GM12878 (cell line): ENCODE measurements at regions of chr19 and their contacts with region 1.

Region 1: GRCh38 chr19:38618590-38619360 is at the start of gene EIF3K:
- DNase-seq: peak; percentile 97
- ATAC-seq: peak; percentile 62
- H3K4me3 ChIP-seq: peak within 1 kb of the TSS; percentile 98
- H3K27ac ChIP-seq: peak within 1 kb of the TSS; percentile 98
- H3K4me1 ChIP-seq: peaks cover 12% of the 10 kb centered on the region
- H3K27me3 ChIP-seq: no peaks in the 10 kb centered on the region
- CTCF ChIP-seq: no peak
- EP300 ChIP-seq: no peak
- POLR2A ChIP-seq: peak; percentile 98
- RAD21 ChIP-seq: no peak
- polyA plus RNA-seq, gene EIF3K: 715 to 863 TPM

Region 2: DNA sequence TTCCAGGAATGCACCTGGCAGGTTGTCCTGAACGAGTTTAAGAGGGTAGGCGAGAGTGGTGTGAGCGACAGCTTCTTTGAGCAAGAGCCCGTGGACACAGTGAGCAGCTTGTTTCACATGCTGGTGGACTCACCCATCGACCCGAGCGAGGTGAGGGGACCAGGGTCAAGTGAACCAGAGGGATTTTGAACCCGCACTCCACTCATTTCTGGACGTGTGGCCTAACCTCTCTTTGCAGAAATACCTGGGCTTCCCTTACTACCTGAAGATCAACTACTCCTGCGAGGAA is 281.5 kb before region 1 on chr19:
- CTCF ChIA-PET with region 1: no interaction called
- POLR2A ChIA-PET with region 1: no interaction called
- RAD21 ChIA-PET with region 1: no interaction called
- SMC1A ChIA-PET with region 1: no interaction called
- in situ Hi-C with region 1: no loop called
- intact Hi-C with region 1: no loop called
- DNase-seq: no peak
- ATAC-seq: no peak
- H3K4me3 ChIP-seq: peak overlapping the region; percentile 46; the same call in 1 of the 2 replicates
- H3K27ac ChIP-seq: no peak overlapping the region
- H3K4me1 ChIP-seq: peaks cover 3% of the 10 kb centered on the region; the same call in 1 of the 2 replicates
- H3K27me3 ChIP-seq: no peaks in the 10 kb centered on the region
- CTCF ChIP-seq: no peak
- EP300 ChIP-seq: no peak
- POLR2A ChIP-seq: no peak
- RAD21 ChIP-seq: no peak

Region 3: GRCh38 chr19:38514812-38515633 is 103.8 kb before region 1 on chr19:
- CTCF ChIA-PET with region 1: interaction called, 5 read pairs
- POLR2A ChIA-PET with region 1: no interaction called
- RAD21 ChIA-PET with region 1: interaction called, 12 read pairs
- SMC1A ChIA-PET with region 1: interaction called, 3 read pairs
- in situ Hi-C with region 1: no loop called
- intact Hi-C with region 1: no loop called
- DNase-seq: no peak
- ATAC-seq: peak; percentile 96
- H3K4me3 ChIP-seq: no peak overlapping the region
- H3K27ac ChIP-seq: no peak overlapping the region
- H3K4me1 ChIP-seq: peaks cover 6% of the 10 kb centered on the region
- H3K27me3 ChIP-seq: no peaks in the 10 kb centered on the region
- CTCF ChIP-seq: peak; percentile 89 to 98 (median 90); a peak in 5 of 6 replicates
- EP300 ChIP-seq: no peak
- POLR2A ChIP-seq: no peak
- RAD21 ChIP-seq: peak; percentile 74

Region 4: GRCh38 chr19:38551450-38551813 is 67.3 kb before region 1 on chr19:
- CTCF ChIA-PET with region 1: interaction called, 60 read pairs
- POLR2A ChIA-PET with region 1: interaction called, 135 read pairs
- RAD21 ChIA-PET with region 1: interaction called, 135 read pairs
- SMC1A ChIA-PET with region 1: interaction called, 85 read pairs
- in situ Hi-C with region 1: no loop called
- intact Hi-C with region 1: no loop called
- DNase-seq: peak; percentile 52
- ATAC-seq: peak; percentile 87
- H3K4me3 ChIP-seq: no peak overlapping the region
- H3K27ac ChIP-seq: no peak overlapping the region
- H3K4me1 ChIP-seq: peaks cover 31% of the 10 kb centered on the region
- H3K27me3 ChIP-seq: no peaks in the 10 kb centered on the region
- CTCF ChIP-seq: no peak
- EP300 ChIP-seq: peak; percentile 87 to 92; a peak in 3 of 4 replicates
- POLR2A ChIP-seq: no peak
- RAD21 ChIP-seq: no peak

Region 5: DNA sequence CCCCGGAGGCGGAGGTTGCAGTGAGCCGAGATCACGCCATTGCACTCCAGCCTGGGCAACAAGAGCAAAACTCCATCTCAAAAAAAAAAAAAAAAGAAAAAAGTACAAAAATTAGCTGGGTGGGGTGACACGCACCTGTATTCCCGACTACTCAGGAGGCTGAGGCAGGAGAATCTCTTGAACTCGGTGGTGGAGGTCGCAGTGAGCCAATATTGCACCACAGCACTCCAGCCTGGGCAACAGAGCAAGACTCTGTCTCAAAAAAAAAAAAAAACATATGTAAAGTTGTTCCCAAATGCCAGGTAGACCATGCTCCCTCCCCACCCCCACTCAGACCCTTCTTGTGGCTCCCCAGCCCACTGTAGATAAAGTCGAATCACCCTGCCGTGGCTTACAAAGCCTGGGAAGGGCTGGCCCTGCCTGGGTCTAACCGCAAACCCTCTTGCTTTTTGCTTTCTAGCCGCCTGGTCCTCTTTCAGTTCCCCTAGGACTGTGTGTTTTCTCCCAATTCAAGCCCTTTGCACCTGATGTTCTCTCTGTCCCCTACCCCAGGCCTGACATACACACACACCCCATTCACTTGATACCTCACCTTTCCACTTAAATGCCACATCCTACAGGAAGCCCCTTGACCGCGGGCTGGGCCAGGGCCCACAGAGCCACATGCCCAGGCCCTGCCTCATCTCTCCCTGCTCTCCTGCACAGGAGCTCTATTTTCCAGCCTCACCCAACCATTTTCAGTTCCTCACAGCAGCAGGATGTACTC is 35.4 kb before region 1 on chr19:
- CTCF ChIA-PET with region 1: interaction called, 7 read pairs
- POLR2A ChIA-PET with region 1: interaction called, 5 read pairs
- RAD21 ChIA-PET with region 1: interaction called, 22 read pairs
- SMC1A ChIA-PET with region 1: interaction called, 6 read pairs
- in situ Hi-C with region 1: no loop called
- intact Hi-C with region 1: no loop called
- DNase-seq: peak; percentile 78
- ATAC-seq: peak; percentile 95
- H3K4me3 ChIP-seq: no peak overlapping the region
- H3K27ac ChIP-seq: peak overlapping the region; percentile 52
- H3K4me1 ChIP-seq: peaks cover 18% of the 10 kb centered on the region
- H3K27me3 ChIP-seq: no peaks in the 10 kb centered on the region
- CTCF ChIP-seq: no peak
- EP300 ChIP-seq: peak; percentile 47 to 51; a peak in 2 of 4 replicates
- POLR2A ChIP-seq: no peak
- RAD21 ChIP-seq: no peak

Region 6: GRCh38 chr19:38634757-38635482 is 16.1 kb after region 1 on chr19:
- CTCF ChIA-PET with region 1: interaction called, 74 read pairs
- POLR2A ChIA-PET with region 1: interaction called, 6 read pairs
- RAD21 ChIA-PET with region 1: interaction called, 38 read pairs
- SMC1A ChIA-PET with region 1: interaction called, 10 read pairs
- in situ Hi-C with region 1: no loop called
- intact Hi-C with region 1: no loop called
- DNase-seq: peak; percentile 32
- ATAC-seq: peak; percentile 73
- H3K4me3 ChIP-seq: no peak overlapping the region
- H3K27ac ChIP-seq: no peak overlapping the region; the same call in 1 of the 2 replicates
- H3K4me1 ChIP-seq: peaks cover 15% of the 10 kb centered on the region
- H3K27me3 ChIP-seq: no peaks in the 10 kb centered on the region
- CTCF ChIP-seq: peak; percentile 86 to 91 (median 88)
- EP300 ChIP-seq: no peak
- POLR2A ChIP-seq: 0 out of 2 replicates have a peak, but pooled peaks have one; percentile 27
- RAD21 ChIP-seq: peak; percentile 83